B cell (primary cell): ENCODE measurements at regions of chr6 and their contacts with region 1.

Region 1: GRCh38 chr6:109382576-109383437 is 540 bp upstream of the CD164 start:
- DNase-seq: peak; percentile 99
- ATAC-seq: peak; percentile 71
- H3K4me3 ChIP-seq: peak overlapping the region; percentile 87 to 98 (median 90)
- H3K4me3 Mint-ChIP-seq: peak overlapping the region; percentile 94
- H3K27ac ChIP-seq: peak overlapping the region; percentile 94 to 97
- H3K27ac Mint-ChIP-seq: peak overlapping the region; percentile 100
- H3K4me1 ChIP-seq: peaks cover 40 to 41% of the 10 kb centered on the region in 2 donors
- H3K4me1 Mint-ChIP-seq: peaks cover 41% of the 10 kb centered on the region
- H3K27me3 ChIP-seq: no peaks in the 10 kb centered on the region
- H3K27me3 Mint-ChIP-seq: no peaks in the 10 kb centered on the region
- CTCF ChIP-seq: peak; percentile 79

Region 2: DNA sequence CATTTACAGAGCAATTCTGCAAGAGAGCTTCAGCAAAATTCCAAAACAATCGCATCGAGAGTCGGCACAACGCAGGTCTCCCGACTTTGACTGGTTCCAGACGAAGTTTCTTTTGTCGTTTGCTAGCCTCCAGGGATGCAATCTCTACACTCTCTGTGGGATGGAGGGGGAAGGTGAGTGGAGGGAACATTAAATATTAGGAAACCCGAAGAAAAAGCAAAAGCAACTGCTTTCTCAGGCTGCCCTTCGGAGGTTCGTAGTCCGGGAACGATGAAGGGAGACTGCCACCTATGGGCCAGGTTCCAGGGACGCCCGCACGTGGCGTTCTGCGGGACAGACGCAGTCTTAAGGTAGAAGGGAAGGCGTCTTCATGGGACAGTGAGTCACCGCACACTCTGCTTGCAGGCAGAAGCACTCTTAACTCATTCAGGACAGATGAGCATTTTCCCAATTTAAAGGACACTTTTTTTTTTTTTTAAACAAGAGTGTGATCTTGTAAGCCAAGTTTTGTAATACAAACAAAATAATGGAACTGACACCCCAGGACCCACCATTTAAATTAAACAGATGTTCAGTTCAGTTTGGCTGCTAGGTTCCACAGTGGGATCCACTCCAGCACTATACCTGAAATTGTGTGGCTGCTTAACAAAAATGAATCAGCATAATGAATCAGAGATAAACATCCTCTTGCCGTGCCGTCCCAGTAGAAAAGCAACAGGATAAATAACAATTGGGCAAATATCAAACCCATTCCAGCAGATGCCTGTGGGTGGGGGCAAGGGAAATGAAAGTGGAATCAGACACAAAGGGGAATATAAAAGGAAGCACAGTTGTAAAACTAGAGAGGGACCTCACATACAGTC is 600.4 kb before region 1 on chr6:
- CTCF ChIA-PET with region 1: no interaction called
- POLR2A ChIA-PET with region 1: no interaction called
- intact Hi-C with region 1: loop called (anchors 5 kb)
- DNase-seq: peak; percentile 84
- ATAC-seq: peak; percentile 96
- H3K4me3 ChIP-seq: peak overlapping the region; percentile 43 to 78 (median 59)
- H3K4me3 Mint-ChIP-seq: peak overlapping the region; percentile 81
- H3K27ac ChIP-seq: no peak overlapping the region
- H3K27ac Mint-ChIP-seq: no peak overlapping the region
- H3K4me1 ChIP-seq: peaks cover 23 to 31% of the 10 kb centered on the region in 2 donors
- H3K4me1 Mint-ChIP-seq: peaks cover 25% of the 10 kb centered on the region
- H3K27me3 ChIP-seq: peaks cover 0 to 20% (median 8%) of the 10 kb centered on the region in 4 experiments
- H3K27me3 Mint-ChIP-seq: peaks cover 27% of the 10 kb centered on the region
- CTCF ChIP-seq: peak; percentile 84

Region 3: GRCh38 chr6:109095027-109095834 is 287.6 kb before region 1 on chr6 and contains the start of gene CEP57L1:
- CTCF ChIA-PET with region 1: interaction called, 16 read pairs
- POLR2A ChIA-PET with region 1: interaction called, 5 read pairs
- intact Hi-C with region 1: loop called (anchors 1 kb)
- DNase-seq: peak; percentile 97
- ATAC-seq: peak; percentile 67
- H3K4me3 ChIP-seq: peak within 1 kb of the TSS; percentile 69 to 98 (median 85)
- H3K4me3 Mint-ChIP-seq: peak within 1 kb of the TSS; percentile 99
- H3K27ac ChIP-seq: peak within 1 kb of the TSS; percentile 95 to 98
- H3K27ac Mint-ChIP-seq: peak within 1 kb of the TSS; percentile 100
- H3K4me1 ChIP-seq: peaks cover 28 to 29% of the 10 kb centered on the region in 2 donors
- H3K4me1 Mint-ChIP-seq: peaks cover 44% of the 10 kb centered on the region
- H3K27me3 ChIP-seq: no peaks in the 10 kb centered on the region
- H3K27me3 Mint-ChIP-seq: no peaks in the 10 kb centered on the region
- CTCF ChIP-seq: no peak
- total RNA-seq, gene CEP57L1: 7.7 and 8.8 TPM in 2 replicates

Region 4: GRCh38 chr6:109393888-109394285 is 11.1 kb after region 1 on chr6:
- CTCF ChIA-PET with region 1: interaction called, 26 read pairs
- POLR2A ChIA-PET with region 1: no interaction called
- intact Hi-C with region 1: no loop called
- DNase-seq: no peak
- ATAC-seq: no peak
- H3K4me3 ChIP-seq: no peak overlapping the region
- H3K4me3 Mint-ChIP-seq: no peak overlapping the region
- H3K27ac ChIP-seq: no peak overlapping the region
- H3K27ac Mint-ChIP-seq: no peak overlapping the region
- H3K4me1 ChIP-seq: peaks cover 0 to 11% of the 10 kb centered on the region in 2 donors
- H3K4me1 Mint-ChIP-seq: peaks cover 8% of the 10 kb centered on the region
- H3K27me3 ChIP-seq: no peaks in the 10 kb centered on the region
- H3K27me3 Mint-ChIP-seq: peaks cover 4% of the 10 kb centered on the region
- CTCF ChIP-seq: no peak

Region 5: DNA sequence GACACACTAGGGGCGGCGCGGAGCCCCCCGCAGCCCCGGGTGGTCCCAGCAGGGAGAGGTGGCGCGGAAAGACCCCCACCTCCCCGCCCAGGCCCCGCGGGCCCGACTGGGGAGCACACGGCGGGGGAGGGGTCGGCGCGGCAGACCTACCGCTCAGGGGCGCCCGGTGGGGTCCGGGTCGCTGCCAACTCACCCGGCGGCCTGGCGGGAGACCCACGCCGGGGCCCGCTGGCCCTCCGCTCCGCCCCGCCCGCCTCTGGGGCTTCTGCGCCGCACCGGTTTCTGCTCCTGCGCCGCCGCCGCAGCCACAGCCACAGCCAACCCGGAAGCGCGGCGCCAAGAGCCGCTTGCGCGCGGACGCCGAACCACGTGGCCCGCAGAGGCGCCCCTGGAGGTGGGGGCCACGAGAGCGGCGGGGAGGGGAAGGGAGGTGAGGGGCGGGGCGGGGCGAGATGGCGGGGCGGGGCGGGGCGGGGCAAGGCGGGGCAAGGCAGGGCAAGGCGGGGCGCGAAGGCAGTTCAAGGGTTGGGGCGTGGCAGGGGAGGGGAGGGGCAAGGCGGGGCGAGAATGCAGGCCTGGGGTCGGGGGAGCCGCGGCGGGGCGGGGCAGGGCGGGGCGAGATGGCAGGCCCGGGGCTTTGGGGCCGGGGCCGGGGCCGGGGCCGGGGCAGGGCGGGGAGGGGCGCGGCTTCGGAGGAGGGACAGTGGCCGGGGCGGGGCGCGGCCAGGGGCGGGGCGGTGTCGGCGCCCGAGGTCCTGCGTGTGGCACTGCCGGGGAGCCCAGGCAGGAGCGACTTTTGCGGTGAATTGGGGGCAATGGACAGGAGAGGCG is 100.3 kb after region 1 on chr6 and contains the start of gene ZBTB24:
- CTCF ChIA-PET with region 1: interaction called, 7 read pairs
- POLR2A ChIA-PET with region 1: interaction called, 12 read pairs
- intact Hi-C with region 1: loop called (anchors 1 kb)
- DNase-seq: peak; percentile 93
- ATAC-seq: peak; percentile 83
- H3K4me3 ChIP-seq: peak within 1 kb of the TSS; percentile 76 to 97 (median 94)
- H3K4me3 Mint-ChIP-seq: peak within 1 kb of the TSS; percentile 96
- H3K27ac ChIP-seq: peak within 1 kb of the TSS; percentile 65 to 81
- H3K27ac Mint-ChIP-seq: peak within 1 kb of the TSS; percentile 89
- H3K4me1 ChIP-seq: peaks cover 40 to 57% of the 10 kb centered on the region in 2 donors
- H3K4me1 Mint-ChIP-seq: peaks cover 50% of the 10 kb centered on the region
- H3K27me3 ChIP-seq: no peaks in the 10 kb centered on the region
- H3K27me3 Mint-ChIP-seq: no peaks in the 10 kb centered on the region
- CTCF ChIP-seq: no peak
- total RNA-seq, gene ZBTB24: 31.4 and 32.9 TPM in 2 replicates

Region 6: DNA sequence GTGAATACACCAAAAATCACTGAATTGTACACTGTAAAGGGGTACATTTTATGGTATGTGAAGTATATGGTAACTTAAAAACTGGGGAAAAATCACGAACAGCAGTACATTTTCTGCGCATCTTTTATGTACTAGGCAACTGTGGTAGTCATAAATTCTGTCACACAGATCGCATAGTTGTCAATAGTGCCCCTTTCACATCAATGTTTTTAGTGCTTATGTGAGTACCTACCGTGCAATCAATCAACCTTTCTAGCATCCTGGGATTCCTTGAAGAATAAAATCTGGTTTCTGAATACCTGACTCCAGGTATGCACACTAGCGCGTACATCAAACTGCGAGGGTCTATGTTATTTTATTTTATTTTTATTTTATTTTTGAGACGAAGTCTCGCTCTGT is 1598.4 kb after region 1 on chr6:
- CTCF ChIA-PET with region 1: no interaction called
- POLR2A ChIA-PET with region 1: no interaction called
- intact Hi-C with region 1: loop called (anchors 5 kb)
- DNase-seq: peak; percentile 43
- ATAC-seq: no peak
- H3K4me3 ChIP-seq: peak overlapping the region; percentile 73 to 98 (median 87)
- H3K4me3 Mint-ChIP-seq: peak overlapping the region; percentile 98
- H3K27ac ChIP-seq: peak overlapping the region; percentile 77 to 93
- H3K27ac Mint-ChIP-seq: peak overlapping the region; percentile 99
- H3K4me1 ChIP-seq: peaks cover 13 to 18% of the 10 kb centered on the region in 2 donors
- H3K4me1 Mint-ChIP-seq: peaks cover 34% of the 10 kb centered on the region
- H3K27me3 ChIP-seq: no peaks in the 10 kb centered on the region
- H3K27me3 Mint-ChIP-seq: no peaks in the 10 kb centered on the region
- CTCF ChIP-seq: no peak